ENCODE measurements at regions of chr3 and their contacts with region 1.

Region 1: DNA sequence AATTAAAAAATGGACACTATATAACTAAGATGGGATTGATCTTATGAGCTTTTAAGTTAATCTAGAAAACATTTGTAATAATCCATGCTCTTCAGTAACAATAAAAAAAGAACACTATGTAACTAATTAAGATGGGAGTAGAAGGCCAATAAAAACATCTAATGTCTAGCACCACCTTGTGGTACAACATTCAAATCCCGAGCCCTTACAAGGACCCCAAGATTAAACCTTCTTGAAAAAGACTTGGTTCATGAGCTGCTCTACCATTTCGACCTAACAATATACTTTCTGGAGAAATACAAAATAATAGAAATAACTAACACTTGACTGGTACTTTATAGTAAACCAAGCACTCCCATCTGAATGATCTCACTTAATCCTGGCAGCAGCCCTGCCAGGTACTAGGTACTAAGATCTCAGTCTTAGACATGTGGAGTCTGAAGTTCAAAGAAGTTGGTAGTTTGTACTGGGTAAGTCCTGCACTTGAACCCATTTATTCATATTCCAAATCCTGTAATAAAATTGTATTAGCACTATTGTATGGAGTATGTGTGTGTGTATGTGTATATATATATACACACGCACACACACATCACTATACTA is 21.8 kb downstream of the METTL6 start:
- DNase-seq: peak; percentile 43
- H3K4me3 Mint-ChIP-seq: no peak overlapping the region
- H3K27ac Mint-ChIP-seq: no peak overlapping the region
- H3K4me1 Mint-ChIP-seq: peaks cover 14% of the 10 kb centered on the region
- H3K27me3 Mint-ChIP-seq: no peaks in the 10 kb centered on the region

Region 2: DNA sequence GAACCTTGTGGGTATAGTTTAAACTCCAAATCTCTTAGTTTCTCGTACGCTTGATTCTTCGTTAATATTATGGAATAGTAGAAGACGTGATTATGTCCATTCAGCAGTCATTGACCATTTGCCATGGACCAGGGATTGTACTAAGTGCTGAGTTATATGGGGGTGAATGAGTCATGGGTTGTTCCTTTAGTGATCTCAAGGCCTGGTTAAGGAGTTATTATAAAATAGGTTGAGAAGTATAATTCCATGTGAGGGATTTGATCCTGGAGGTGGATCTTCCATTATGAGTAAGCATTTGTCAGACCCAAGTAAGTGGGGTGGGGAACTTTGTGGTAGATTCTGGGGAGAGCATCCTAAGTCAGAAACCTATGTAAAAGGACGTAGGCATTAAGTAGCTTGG is 442.8 kb before region 1 on chr3:
- CTCF ChIA-PET with region 1: no interaction called
- DNase-seq: no peak
- H3K4me3 Mint-ChIP-seq: no peak overlapping the region
- H3K27ac Mint-ChIP-seq: no peak overlapping the region
- H3K4me1 Mint-ChIP-seq: peaks cover 20% of the 10 kb centered on the region
- H3K27me3 Mint-ChIP-seq: no peaks in the 10 kb centered on the region

Region 3: GRCh38 chr3:15199493-15200105 is 205.9 kb before region 1 on chr3:
- CTCF ChIA-PET with region 1: interaction called, 40 read pairs
- DNase-seq: no peak
- H3K4me3 Mint-ChIP-seq: no peak overlapping the region
- H3K27ac Mint-ChIP-seq: no peak overlapping the region
- H3K4me1 Mint-ChIP-seq: peaks cover 3% of the 10 kb centered on the region
- H3K27me3 Mint-ChIP-seq: peaks cover 23% of the 10 kb centered on the region

Region 4: DNA sequence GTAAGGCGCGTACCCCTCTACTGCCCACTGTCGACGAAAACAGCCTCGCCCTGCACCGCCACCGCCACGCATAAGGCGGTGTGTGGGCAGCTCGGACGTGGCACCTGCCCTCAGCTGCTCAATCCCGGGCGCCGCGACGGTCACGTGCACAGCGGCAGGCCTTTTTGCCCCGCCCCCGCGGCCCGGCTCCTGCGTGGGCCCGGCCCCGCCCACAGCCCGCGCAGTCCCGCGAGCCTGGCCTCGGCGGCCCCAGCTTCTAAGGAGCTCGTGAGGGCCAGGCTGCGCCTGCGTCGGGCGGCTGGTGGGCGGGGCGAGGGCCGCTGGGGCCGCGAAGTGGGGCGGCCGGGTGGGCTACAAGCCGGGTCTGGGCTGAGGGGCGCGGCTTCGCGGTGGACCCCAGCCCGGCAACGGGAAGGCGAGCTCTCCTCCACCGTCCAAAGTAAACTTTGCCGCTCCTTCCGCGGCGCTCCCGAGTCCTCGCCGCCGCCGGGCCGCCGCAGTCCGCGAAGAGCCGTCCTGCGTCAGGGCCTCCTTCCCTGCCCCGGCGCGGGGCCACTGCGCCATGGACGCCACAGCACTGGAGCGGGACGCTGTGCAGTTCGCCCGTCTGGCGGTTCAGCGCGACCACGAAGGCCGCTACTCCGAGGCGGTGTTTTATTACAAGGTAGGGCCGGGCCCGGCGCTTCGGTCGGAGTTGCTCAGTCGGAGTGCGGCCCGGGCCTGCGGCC is 199.5 kb before region 1 on chr3 and contains the start of gene CAPN7:
- CTCF ChIA-PET with region 1: interaction called, 40 read pairs
- DNase-seq: peak; percentile 95
- H3K4me3 Mint-ChIP-seq: peak within 1 kb of the TSS; percentile 78
- H3K27ac Mint-ChIP-seq: peak within 1 kb of the TSS; percentile 90
- H3K4me1 Mint-ChIP-seq: peaks cover 27% of the 10 kb centered on the region
- H3K27me3 Mint-ChIP-seq: peaks cover 9% of the 10 kb centered on the region

Region 5: GRCh38 chr3:15323063-15323462 is 82.5 kb before region 1 on chr3:
- CTCF ChIA-PET with region 1: no interaction called
- DNase-seq: no peak
- H3K4me3 Mint-ChIP-seq: no peak overlapping the region
- H3K27ac Mint-ChIP-seq: no peak overlapping the region
- H3K4me1 Mint-ChIP-seq: peaks cover 71% of the 10 kb centered on the region
- H3K27me3 Mint-ChIP-seq: no peaks in the 10 kb centered on the region

Region 6: DNA sequence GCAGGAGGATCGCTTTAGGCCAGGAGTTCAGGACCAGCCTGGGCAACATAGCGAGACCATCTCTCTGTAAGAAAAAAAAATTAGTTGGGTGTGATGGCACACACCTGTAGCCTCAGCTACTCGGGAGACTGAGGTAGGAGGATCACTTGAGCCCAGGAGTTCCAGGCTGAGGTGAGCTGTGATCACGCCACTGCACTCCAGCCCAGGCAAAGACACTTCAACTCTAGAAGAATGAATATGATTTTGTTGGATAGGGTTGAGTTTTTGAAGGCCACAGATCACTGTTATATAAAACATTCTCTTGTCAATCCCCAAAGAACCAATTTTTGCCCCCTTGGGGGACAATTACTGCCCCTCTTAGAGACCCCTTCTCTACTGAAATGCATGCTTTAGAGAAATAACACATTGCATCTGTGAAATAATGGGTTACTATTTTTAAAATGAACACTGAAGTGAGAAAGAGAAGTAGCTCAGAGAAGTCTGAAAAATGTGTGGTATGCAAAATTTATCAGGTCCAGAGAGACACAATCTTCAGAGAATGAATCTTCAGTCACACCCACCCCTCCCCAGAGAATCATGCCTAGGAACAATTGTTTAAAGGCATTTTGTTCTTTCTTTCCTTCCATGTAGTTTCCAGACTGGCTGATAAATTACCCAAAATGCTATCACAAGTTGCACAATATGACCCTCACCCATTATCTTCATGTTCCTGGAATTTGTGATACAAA is 20.9 kb before region 1 on chr3:
- CTCF ChIA-PET with region 1: interaction called, 12 read pairs
- DNase-seq: no peak
- H3K4me3 Mint-ChIP-seq: no peak overlapping the region
- H3K27ac Mint-ChIP-seq: no peak overlapping the region
- H3K4me1 Mint-ChIP-seq: peaks cover 11% of the 10 kb centered on the region
- H3K27me3 Mint-ChIP-seq: no peaks in the 10 kb centered on the region

Region 7: DNA sequence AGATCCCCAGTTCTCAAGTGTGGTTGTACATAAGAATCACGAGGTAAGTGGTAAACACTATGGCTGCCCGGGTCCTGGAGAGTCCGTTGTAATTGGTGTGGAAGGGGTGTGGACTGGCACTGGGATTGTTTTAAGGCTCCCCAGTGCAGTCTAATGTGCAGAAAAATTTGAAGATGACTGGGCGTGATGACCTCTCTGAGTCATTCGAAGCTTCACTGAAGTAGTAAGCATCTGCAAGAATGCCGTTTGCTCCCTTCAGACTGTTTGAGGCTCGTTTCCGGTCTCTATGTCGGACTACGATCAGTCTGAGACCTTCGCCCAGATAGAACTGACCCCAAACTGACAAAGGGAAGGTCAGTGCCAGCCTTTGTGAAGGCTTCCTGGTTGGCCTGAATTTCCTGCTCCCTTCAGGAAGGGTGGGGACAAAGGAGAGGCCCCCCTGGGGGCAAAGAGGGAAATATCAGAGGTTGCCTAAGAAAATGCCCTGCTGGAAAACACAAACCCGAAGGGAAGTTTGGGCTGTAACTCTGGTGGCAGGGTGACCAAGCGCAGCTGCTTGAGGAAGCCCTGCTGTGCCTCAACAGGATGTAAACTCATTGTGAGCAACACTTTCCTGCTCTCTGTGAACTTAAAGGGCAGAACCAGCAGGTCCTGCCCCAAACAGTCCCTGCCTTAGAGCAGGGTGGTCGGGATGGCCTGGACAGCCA is 230.6 kb after region 1 on chr3:
- CTCF ChIA-PET with region 1: no interaction called
- DNase-seq: peak; percentile 38
- H3K4me3 Mint-ChIP-seq: no peak overlapping the region
- H3K27ac Mint-ChIP-seq: no peak overlapping the region
- H3K4me1 Mint-ChIP-seq: peaks cover 25% of the 10 kb centered on the region
- H3K27me3 Mint-ChIP-seq: peaks cover 4% of the 10 kb centered on the region

Measured in activated naive CD4-positive, alpha-beta T cell treated with anti-CD3 and anti-CD28 coated beads, Interleukin-2, amount 10 ng/mL, durations not matched to agents 7 days and 5 days (primary cell).